ENCODE measurements at regions of chr12 and their contacts with region 1.

Region 1: DNA sequence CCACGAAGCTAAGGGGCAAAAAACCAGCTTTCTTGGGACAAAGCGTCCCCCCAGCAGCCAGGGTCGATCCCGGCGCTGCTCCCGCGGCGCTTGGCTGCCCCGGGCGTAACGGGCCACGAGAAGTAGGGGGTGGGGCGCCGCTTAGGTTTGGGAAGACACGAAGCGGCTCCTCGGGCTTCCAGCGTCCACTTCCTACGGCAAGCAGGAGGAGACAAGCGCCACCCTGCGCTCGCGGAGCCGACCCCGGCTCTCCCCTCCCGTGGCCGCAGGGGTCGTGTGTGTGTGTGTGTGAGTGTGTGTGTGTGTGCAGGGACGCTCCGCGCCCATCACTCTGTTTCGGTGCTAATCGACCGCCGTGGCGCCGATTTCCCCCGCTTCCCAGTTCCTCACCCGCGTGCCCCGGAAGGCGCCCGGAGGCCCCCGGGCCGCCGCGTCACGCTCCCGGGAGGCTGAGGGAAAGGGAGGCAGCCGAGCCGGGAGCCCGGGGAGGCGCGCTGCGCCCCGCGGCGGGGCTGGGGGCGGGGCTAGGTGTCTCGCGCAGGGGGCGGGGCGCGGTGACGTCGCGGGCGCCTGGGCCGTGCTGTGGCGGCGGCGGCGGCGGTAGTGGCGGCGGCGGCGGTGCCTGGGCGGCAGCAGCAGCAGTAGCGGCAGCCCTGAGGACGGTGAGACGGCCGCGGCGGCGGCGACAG is at the start of gene ERC1:
- DNase-seq: peak; percentile 93 to 97
- H3K4me3 ChIP-seq: peak within 1 kb of the TSS; percentile 80
- H3K4me3 Mint-ChIP-seq: peak within 1 kb of the TSS; percentile 84
- H3K27ac Mint-ChIP-seq: peak within 1 kb of the TSS; percentile 91
- H3K4me1 ChIP-seq: peaks cover 26% of the 10 kb centered on the region
- H3K4me1 Mint-ChIP-seq: peaks cover 40% of the 10 kb centered on the region
- H3K27me3 ChIP-seq: no peaks in the 10 kb centered on the region
- H3K27me3 Mint-ChIP-seq: no peaks in the 10 kb centered on the region
- CTCF ChIP-seq: peak in 1 of 2 experiments; percentile 9
- total RNA-seq, gene ERC1: 88.4 and 111 TPM in 2 replicates

Region 2: DNA sequence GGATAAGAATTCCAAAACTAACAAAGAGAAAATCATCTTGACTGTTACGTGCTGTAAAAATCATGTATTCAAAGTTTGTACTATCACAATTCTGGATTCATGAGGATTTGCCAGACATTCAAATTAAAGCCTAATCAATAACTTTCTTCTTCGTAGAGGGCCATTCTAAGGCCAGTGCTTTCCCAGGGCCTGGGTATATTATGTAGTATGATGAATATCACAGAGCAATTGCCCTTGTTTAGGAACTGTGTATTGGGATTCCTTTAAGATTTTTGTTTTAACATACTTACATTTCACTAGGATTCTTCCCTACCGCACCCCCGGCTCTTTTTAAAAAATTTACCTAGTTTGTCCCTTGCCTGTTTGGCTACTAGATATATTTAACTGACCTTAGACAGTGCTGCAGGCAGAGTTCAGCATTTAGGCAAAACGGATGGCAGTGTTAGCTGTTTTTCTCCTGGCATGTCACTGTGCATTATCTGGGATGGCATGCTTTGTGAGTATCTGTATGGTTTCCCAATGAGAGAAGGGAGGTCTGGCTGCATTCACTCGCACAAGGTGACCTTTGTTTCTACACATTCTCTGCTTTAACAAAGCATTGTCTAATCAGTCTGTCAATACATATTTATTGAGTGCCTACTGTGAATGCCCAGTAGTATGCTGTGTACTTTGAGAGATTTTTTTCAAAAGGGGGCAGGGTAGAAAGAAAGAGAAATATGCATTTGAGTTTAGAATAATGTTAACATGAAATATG is 63.5 kb after region 1 on chr12:
- CTCF ChIA-PET with region 1: no interaction called
- POLR2A ChIA-PET with region 1: no interaction called
- intact Hi-C with region 1: loop called (anchors 5 kb)
- DNase-seq: peak in 1 of 2 experiments; percentile 58
- H3K4me3 ChIP-seq: no peak overlapping the region
- H3K4me3 Mint-ChIP-seq: no peak overlapping the region
- H3K27ac Mint-ChIP-seq: peak overlapping the region; percentile 42
- H3K4me1 ChIP-seq: peaks cover 21% of the 10 kb centered on the region
- H3K4me1 Mint-ChIP-seq: peaks cover 34% of the 10 kb centered on the region
- H3K27me3 ChIP-seq: no peaks in the 10 kb centered on the region
- H3K27me3 Mint-ChIP-seq: no peaks in the 10 kb centered on the region
- CTCF ChIP-seq: no peak